ENCODE measurements at regions of chr7 and their contacts with region 1.

Region 1: DNA sequence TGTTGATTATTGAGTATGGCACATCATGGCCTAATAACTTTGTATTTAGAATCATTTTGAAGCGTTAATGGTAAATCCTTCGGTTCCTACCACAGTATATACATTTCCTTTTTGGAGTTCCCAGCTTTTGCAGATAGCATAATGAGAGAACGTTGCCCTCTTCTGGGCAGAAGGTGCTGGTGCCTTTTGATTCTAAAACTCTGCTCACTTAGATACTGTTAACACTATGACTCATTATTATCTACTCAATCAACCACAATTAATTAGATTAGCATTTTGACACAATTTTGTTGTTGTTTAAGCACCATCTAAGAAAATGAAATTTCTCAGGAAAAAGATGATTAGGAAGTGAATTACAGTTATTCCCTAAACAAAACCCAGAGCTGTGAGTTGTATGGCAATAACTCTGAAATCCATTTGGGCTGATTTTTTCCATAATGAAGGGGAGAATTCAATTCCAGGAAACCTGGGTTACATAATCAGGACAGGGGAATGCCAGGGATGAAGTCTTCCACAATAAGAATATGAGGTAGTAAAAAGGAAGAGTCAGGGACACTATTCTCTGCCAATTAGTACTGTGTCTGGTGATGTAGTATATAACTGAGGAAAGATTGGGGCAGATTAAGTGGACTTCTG is 11.5 kb upstream of the DLD start:
- DNase-seq: peak; percentile 53 to 68 (median 57)
- H3K4me3 ChIP-seq: no peak overlapping the region
- H3K4me3 Mint-ChIP-seq: no peak overlapping the region
- H3K27ac ChIP-seq: no peak overlapping the region
- H3K27ac Mint-ChIP-seq: peak overlapping the region in 2 of 7 donors; percentile 4 to 52
- H3K4me1 ChIP-seq: peaks cover 18% of the 10 kb centered on the region
- H3K4me1 Mint-ChIP-seq: peaks cover 13 to 26% (median 21%) of the 10 kb centered on the region in 4 donors
- H3K27me3 ChIP-seq: no peaks in the 10 kb centered on the region
- H3K27me3 Mint-ChIP-seq: peaks cover 3 to 6% of the 10 kb centered on the region in 2 donors

Region 2: GRCh38 chr7:106793015-106793975 is 1086.2 kb before region 1 on chr7:
- CTCF ChIA-PET with region 1: interaction called, 5 read pairs
- POLR2A ChIA-PET with region 1: no interaction called
- intact Hi-C with region 1: loop called (anchors 2 kb)
- DNase-seq: peak in 4 of 5 donors; percentile 47 to 52 (median 48)
- H3K4me3 ChIP-seq: no peak overlapping the region
- H3K4me3 Mint-ChIP-seq: no peak overlapping the region
- H3K27ac ChIP-seq: no peak overlapping the region
- H3K27ac Mint-ChIP-seq: no peak overlapping the region
- H3K4me1 ChIP-seq: no peaks in the 10 kb centered on the region
- H3K4me1 Mint-ChIP-seq: peaks cover 0 to 3% (median 0%) of the 10 kb centered on the region in 4 donors
- H3K27me3 ChIP-seq: no peaks in the 10 kb centered on the region
- H3K27me3 Mint-ChIP-seq: peaks cover 2 to 3% of the 10 kb centered on the region in 2 donors

Region 3: GRCh38 chr7:107462740-107463444 is 416.6 kb before region 1 on chr7:
- CTCF ChIA-PET with region 1: interaction called, 76 read pairs
- POLR2A ChIA-PET with region 1: interaction called, 5 read pairs
- intact Hi-C with region 1: loop called (anchors 1 kb)
- DNase-seq: peak; percentile 36 to 51 (median 46)
- H3K4me3 ChIP-seq: no peak overlapping the region
- H3K4me3 Mint-ChIP-seq: no peak overlapping the region
- H3K27ac ChIP-seq: no peak overlapping the region
- H3K27ac Mint-ChIP-seq: peak overlapping the region in 2 of 7 donors; percentile 6 to 17
- H3K4me1 ChIP-seq: no peaks in the 10 kb centered on the region
- H3K4me1 Mint-ChIP-seq: peaks cover 0 to 5% (median under 1%) of the 10 kb centered on the region in 4 donors
- H3K27me3 ChIP-seq: no peaks in the 10 kb centered on the region
- H3K27me3 Mint-ChIP-seq: no peaks in the 10 kb centered on the region

Region 4: DNA sequence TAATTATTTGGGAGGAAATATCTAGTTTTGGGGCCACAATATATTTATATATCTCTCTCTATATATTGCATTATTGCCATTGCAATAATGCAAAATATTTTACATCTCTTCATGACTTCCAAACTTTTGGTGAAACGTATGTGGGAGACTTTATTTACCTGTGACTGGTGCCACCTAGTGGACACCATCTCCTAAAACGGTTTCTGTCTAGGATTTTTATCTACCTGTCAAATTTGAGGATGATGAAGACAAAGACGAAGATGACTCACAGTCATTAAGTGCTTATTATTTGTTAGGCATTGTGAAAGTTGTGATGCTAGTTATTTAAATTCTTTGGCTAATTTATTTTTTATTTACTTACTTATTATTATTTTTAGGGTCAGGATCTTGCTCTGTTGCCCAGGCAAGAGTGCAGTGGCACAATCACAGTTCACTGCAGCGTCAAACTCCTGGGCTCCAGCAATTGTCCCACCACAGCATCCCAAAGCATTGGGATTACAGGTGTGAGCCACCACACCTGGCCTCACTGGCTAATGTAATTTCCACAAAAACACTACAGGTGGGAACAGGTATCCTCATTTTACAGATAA is 154.3 kb before region 1 on chr7:
- CTCF ChIA-PET with region 1: interaction called, 30 read pairs
- POLR2A ChIA-PET with region 1: interaction called, 3 read pairs
- intact Hi-C with region 1: loop called (anchors 1 kb)
- DNase-seq: peak; percentile 41 to 54 (median 48)
- H3K4me3 ChIP-seq: no peak overlapping the region
- H3K4me3 Mint-ChIP-seq: no peak overlapping the region
- H3K27ac ChIP-seq: no peak overlapping the region
- H3K27ac Mint-ChIP-seq: no peak overlapping the region
- H3K4me1 ChIP-seq: no peaks in the 10 kb centered on the region
- H3K4me1 Mint-ChIP-seq: peaks cover 0 to 3% (median 0%) of the 10 kb centered on the region in 4 donors
- H3K27me3 ChIP-seq: no peaks in the 10 kb centered on the region
- H3K27me3 Mint-ChIP-seq: peaks cover 0 to 3% of the 10 kb centered on the region in 2 donors

Region 5: DNA sequence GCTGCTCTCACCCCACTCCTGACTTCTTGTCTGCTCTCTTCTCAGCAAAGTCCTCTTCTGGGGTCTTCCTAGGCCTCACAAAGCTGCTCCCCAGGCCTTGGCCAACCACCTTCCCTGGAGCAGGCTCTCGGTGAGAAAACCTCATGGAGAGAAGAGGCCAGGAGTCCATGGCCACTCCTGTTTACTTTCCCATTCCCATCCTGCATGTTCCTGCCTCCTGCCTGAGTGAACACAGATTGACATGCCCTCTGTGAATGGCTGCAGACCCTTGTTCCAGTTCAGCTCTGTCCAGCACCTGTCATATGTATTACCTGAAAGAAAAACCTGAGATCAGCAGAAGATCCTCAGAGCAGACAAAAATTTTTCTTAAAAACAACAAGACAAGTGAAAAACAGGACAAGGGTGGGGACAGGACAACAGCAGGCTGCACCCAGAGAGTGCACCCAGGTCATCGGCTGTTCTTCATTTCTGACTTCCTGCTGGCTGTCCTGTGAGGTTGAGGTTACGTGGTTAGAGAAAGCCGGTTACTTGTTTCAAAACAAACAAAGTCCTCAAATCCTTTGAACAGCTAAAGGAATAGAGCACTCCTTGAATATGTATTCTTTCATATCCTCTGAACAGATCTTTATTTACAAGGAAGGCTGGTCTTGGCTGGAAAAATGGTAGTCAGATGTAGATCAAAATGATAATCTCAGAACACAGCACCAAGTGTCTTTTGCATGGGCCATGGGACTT is 22.5 kb before region 1 on chr7:
- CTCF ChIA-PET with region 1: interaction called, 33 read pairs
- POLR2A ChIA-PET with region 1: interaction called, 16 read pairs
- intact Hi-C with region 1: no loop called
- DNase-seq: peak; percentile 49 to 70 (median 58)
- H3K4me3 ChIP-seq: peak overlapping the region; percentile 17 to 26
- H3K4me3 Mint-ChIP-seq: peak overlapping the region; percentile 18 to 82 (median 70)
- H3K27ac ChIP-seq: peak overlapping the region; percentile 48
- H3K27ac Mint-ChIP-seq: peak overlapping the region; percentile 84 to 94 (median 91)
- H3K4me1 ChIP-seq: peaks cover 71% of the 10 kb centered on the region
- H3K4me1 Mint-ChIP-seq: peaks cover 47 to 82% (median 70%) of the 10 kb centered on the region in 4 donors
- H3K27me3 ChIP-seq: no peaks in the 10 kb centered on the region
- H3K27me3 Mint-ChIP-seq: no peaks in the 10 kb centered on the region

Region 6: DNA sequence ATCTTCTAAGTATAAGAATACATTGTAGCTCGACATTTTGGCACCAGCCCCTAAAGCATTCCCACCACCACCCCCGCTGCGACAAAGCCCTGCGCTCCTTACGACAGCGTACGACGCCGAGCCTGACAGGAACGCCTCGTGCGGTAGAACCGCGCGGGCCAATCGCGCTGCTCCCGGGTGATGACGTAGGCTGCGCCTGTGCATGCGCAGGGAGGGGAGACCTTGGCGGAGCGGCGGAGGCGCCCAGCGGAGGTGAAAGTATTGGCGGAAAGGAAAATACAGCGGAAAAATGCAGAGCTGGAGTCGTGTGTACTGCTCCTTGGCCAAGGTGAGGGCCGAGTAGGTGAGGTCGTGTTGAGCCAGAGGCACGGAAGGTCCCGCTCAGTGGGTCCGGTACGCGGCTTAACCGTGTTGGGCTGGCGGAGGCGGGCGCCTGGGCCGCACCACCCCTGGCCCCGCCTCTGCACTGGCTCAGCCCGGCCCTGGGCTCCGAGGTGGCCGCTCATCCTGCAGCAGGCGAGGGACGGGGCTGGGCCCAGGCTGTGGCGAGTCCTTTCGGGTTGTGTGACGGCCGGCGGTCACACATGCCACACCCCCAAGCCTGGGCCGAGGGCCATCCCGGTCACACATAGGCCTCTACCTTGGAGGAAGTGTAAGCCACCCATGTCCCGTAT is 11.6 kb after region 1 on chr7 and contains the start of gene DLD:
- CTCF ChIA-PET with region 1: interaction called, 52 read pairs
- POLR2A ChIA-PET with region 1: interaction called, 8 read pairs
- intact Hi-C with region 1: loop called (anchors 1 kb)
- DNase-seq: peak; percentile 92 to 95 (median 93)
- H3K4me3 ChIP-seq: peak within 1 kb of the TSS; percentile 84 to 98
- H3K4me3 Mint-ChIP-seq: peak within 1 kb of the TSS; percentile 93 to 100 (median 98)
- H3K27ac ChIP-seq: peak within 1 kb of the TSS; percentile 95
- H3K27ac Mint-ChIP-seq: peak within 1 kb of the TSS; percentile 97 to 100 (median 99)
- H3K4me1 ChIP-seq: peaks cover 52% of the 10 kb centered on the region
- H3K4me1 Mint-ChIP-seq: peaks cover 40 to 56% (median 48%) of the 10 kb centered on the region in 4 donors
- H3K27me3 ChIP-seq: no peaks in the 10 kb centered on the region
- H3K27me3 Mint-ChIP-seq: peaks cover 0 to 3% of the 10 kb centered on the region in 2 donors
- total RNA-seq, gene DLD: 42.1 to 51.1 TPM